ENCODE measurements at regions of chr20 and their contacts with region 1.

Region 1: DNA sequence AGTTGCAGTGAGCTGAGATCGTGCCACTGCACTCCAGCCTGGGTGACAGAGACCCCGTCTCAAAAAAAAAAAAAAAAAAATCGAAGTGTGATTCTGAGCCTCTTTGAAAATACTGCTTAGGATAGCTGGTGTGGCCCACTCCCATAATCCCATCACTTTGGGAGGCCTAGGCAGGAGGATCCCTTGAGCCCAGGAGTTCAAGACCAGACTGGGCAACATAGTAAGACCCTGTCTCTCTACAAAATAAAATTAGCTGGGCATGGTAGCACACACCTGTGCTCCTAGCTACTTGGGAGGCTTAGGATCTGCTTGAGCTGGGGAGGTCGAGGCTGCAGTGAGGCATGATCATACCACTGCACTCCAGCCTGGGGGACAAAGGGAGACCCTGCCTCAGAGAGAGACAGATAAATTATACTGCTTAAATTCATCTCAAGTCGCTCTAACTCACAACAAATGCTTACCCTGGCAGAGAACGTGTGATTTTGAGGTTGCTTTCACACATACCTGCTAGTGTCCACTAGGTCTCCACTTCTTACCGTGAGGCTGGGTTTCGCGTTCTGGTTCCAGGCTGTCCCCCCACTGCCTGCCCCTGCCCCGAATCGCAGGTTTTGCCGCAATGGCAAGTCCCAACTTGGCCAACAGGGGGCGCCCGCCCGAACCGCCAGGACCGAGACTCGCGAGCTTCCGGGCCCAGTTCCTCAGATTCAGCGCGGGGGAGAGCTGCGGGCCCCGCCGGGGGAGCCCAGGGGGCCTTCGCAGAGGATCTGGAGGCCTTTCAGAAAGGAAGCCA is 12.3 kb upstream of the TMC2 start:
- DNase-seq: peak; percentile 95
- ATAC-seq: peak; percentile 76
- H3K4me3 Mint-ChIP-seq: peak overlapping the region; percentile 81
- H3K27ac Mint-ChIP-seq: peak overlapping the region; percentile 88
- H3K4me1 Mint-ChIP-seq: peaks cover 15% of the 10 kb centered on the region
- H3K27me3 Mint-ChIP-seq: peaks cover 2% of the 10 kb centered on the region

Region 2: GRCh38 chr20:2349818-2350508 is 174.2 kb before region 1 on chr20:
- CTCF ChIA-PET with region 1: no interaction called
- POLR2A ChIA-PET with region 1: no interaction called
- intact Hi-C with region 1: no loop called
- DNase-seq: no peak
- ATAC-seq: no peak
- H3K4me3 Mint-ChIP-seq: no peak overlapping the region
- H3K27ac Mint-ChIP-seq: no peak overlapping the region
- H3K4me1 Mint-ChIP-seq: peaks cover 6% of the 10 kb centered on the region
- H3K27me3 Mint-ChIP-seq: peaks cover 17% of the 10 kb centered on the region

Region 3: GRCh38 chr20:2470423-2471193 is 53.5 kb before region 1 on chr20 and contains the start of gene SNRPB:
- CTCF ChIA-PET with region 1: interaction called, 18 read pairs
- POLR2A ChIA-PET with region 1: interaction called, 5 read pairs
- intact Hi-C with region 1: loop called (anchors 1 to 2 kb)
- DNase-seq: peak; percentile 98
- ATAC-seq: peak; percentile 99
- H3K4me3 Mint-ChIP-seq: peak within 1 kb of the TSS; percentile 96
- H3K27ac Mint-ChIP-seq: peak within 1 kb of the TSS; percentile 100
- H3K4me1 Mint-ChIP-seq: peaks cover 49% of the 10 kb centered on the region
- H3K27me3 Mint-ChIP-seq: no peaks in the 10 kb centered on the region
- total RNA-seq, gene SNRPB: 348 to 466 TPM

Region 4: GRCh38 chr20:2508631-2509467 is 15.3 kb before region 1 on chr20 and contains the start of gene ZNF343:
- CTCF ChIA-PET with region 1: interaction called, 73 read pairs
- POLR2A ChIA-PET with region 1: no interaction called
- intact Hi-C with region 1: loop called (anchors 1 to 2 kb)
- DNase-seq: peak; percentile 88
- ATAC-seq: peak; percentile 95
- H3K4me3 Mint-ChIP-seq: peak within 1 kb of the TSS; percentile 85
- H3K27ac Mint-ChIP-seq: peak within 1 kb of the TSS; percentile 95
- H3K4me1 Mint-ChIP-seq: peaks cover 8% of the 10 kb centered on the region
- H3K27me3 Mint-ChIP-seq: peaks cover 5% of the 10 kb centered on the region
- total RNA-seq, gene ZNF343: 9.9 to 12.3 TPM

Region 5: DNA sequence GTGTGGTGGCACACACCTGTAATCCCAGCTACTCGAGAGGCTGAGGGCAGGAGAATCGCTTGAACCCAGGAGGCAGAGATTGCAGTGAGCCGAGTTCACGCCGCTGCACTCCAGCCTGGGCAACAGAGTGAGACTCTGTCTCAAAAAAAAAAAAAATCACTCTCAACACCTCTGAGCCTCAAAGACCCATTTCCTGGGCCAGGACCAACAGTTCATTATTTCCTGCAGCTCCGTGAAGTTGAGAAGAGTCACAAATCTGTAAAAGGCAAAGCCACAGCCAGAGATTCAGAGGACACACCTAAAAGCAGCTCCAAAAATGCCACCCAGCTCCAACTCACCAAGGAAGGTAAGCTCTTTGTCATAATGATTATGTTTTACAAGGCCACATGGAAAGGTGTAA is 113.1 kb after region 1 on chr20:
- CTCF ChIA-PET with region 1: interaction called, 16 read pairs
- POLR2A ChIA-PET with region 1: no interaction called
- intact Hi-C with region 1: no loop called
- DNase-seq: no peak
- ATAC-seq: no peak
- H3K4me3 Mint-ChIP-seq: no peak overlapping the region
- H3K27ac Mint-ChIP-seq: no peak overlapping the region
- H3K4me1 Mint-ChIP-seq: no peaks in the 10 kb centered on the region
- H3K27me3 Mint-ChIP-seq: peaks cover 6% of the 10 kb centered on the region

Region 6: DNA sequence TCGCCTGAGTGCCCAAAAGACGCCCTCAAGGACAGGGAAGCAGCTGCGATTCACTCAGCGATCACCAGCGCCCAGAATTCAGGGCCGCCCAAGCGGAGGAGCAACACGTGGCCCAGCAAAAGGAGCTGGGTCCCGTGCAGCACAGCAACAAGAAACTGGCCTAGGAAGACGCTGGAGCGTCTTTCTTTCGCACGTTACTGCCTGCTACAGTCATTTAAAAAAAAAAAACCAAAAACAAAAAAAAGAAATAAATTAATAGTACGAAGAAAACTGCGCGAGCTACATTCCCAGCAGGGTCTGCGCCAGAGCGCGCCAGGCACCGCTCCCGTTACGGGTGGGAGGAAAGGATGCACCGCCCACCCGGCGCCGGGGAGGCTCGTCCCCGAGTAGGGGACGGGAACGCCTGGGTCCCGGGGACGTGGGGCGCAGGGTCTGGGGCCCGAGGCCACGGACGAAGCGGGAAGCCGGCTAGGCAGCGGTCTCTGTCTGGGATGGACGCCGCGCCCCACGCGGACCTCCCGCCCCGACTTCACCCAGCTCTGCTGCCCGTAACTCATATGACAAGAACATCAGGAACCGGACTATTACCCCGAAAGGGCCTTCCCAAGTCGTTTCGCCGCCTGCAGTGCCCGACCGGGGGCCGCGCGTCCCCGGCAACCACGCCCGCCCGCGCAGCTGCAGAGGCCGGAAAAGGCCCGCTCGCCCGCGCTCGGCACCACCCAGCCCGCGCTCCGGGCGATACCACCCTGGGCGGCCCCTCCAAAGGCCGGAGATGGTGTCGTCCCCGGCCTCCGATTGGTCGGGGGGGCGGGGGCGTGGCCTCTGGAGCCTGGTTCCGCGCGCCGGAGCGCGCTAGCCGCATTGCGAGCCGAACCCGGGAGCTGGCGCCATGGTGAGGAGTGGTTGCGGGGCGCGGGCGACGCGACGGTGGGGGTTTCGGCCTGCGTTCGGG is 127.9 kb after region 1 on chr20 and contains the start of gene NOP56:
- CTCF ChIA-PET with region 1: interaction called, 34 read pairs
- POLR2A ChIA-PET with region 1: interaction called, 6 read pairs
- intact Hi-C with region 1: loop called (anchors 1 to 2 kb)
- DNase-seq: peak; percentile 95
- ATAC-seq: peak; percentile 84
- H3K4me3 Mint-ChIP-seq: peak within 1 kb of the TSS; percentile 87
- H3K27ac Mint-ChIP-seq: peak within 1 kb of the TSS; percentile 90
- H3K4me1 Mint-ChIP-seq: peaks cover 40% of the 10 kb centered on the region
- H3K27me3 Mint-ChIP-seq: no peaks in the 10 kb centered on the region
- total RNA-seq, gene NOP56: 504 to 532 TPM